Activated naive CD4-positive, alpha-beta T cell treated with anti-CD3 and anti-CD28 coated beads for 36 hours (primary cell): ENCODE measurements at regions of chr2 and their contacts with region 1.

Region 1: GRCh38 chr2:70142590-70143313 is 48.1 kb downstream of the C2orf42 start:
- DNase-seq: peak; percentile 100
- H3K4me3 Mint-ChIP-seq: peak overlapping the region; percentile 93
- H3K27ac Mint-ChIP-seq: peak overlapping the region; percentile 99
- H3K4me1 Mint-ChIP-seq: peaks cover 53% of the 10 kb centered on the region
- H3K27me3 Mint-ChIP-seq: no peaks in the 10 kb centered on the region

Region 2: DNA sequence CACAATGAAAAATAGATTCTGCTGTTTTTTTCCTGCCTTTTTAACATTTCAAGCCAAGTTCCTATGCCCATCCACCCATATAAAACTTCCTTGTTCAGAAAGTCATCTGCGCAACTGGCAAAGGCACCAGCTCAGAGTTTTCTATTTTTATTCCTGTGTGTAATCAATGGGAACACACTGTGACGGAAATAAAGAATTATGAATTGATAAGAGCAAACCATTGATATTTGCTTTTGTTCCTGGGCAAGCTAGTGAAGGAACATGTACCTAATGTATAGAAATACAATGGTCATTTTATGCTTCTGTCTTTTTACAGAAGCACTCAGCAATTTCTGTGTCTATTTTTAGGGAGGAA is 468.5 kb before region 1 on chr2:
- CTCF ChIA-PET with region 1: no interaction called
- intact Hi-C with region 1: no loop called
- DNase-seq: no peak
- H3K4me3 Mint-ChIP-seq: no peak overlapping the region
- H3K27ac Mint-ChIP-seq: no peak overlapping the region
- H3K4me1 Mint-ChIP-seq: peaks cover 28% of the 10 kb centered on the region
- H3K27me3 Mint-ChIP-seq: no peaks in the 10 kb centered on the region

Region 3: GRCh38 chr2:69741619-69742466 is 400.9 kb before region 1 on chr2 and contains the start of gene ANXA4:
- CTCF ChIA-PET with region 1: no interaction called
- intact Hi-C with region 1: loop called (anchors 5 kb)
- DNase-seq: peak; percentile 78
- H3K4me3 Mint-ChIP-seq: peak within 1 kb of the TSS; percentile 75
- H3K27ac Mint-ChIP-seq: peak within 1 kb of the TSS; percentile 78
- H3K4me1 Mint-ChIP-seq: peaks cover 12% of the 10 kb centered on the region
- H3K27me3 Mint-ChIP-seq: no peaks in the 10 kb centered on the region
- total RNA-seq, gene ANXA4: 21.4 to 23.9 TPM

Region 4: GRCh38 chr2:69985688-69986087 is 157.1 kb before region 1 on chr2:
- CTCF ChIA-PET with region 1: interaction called, 3 read pairs
- intact Hi-C with region 1: loop called (anchors 5 kb)
- DNase-seq: no peak
- H3K4me3 Mint-ChIP-seq: no peak overlapping the region
- H3K27ac Mint-ChIP-seq: no peak overlapping the region
- H3K4me1 Mint-ChIP-seq: peaks cover 3% of the 10 kb centered on the region
- H3K27me3 Mint-ChIP-seq: no peaks in the 10 kb centered on the region

Region 5: DNA sequence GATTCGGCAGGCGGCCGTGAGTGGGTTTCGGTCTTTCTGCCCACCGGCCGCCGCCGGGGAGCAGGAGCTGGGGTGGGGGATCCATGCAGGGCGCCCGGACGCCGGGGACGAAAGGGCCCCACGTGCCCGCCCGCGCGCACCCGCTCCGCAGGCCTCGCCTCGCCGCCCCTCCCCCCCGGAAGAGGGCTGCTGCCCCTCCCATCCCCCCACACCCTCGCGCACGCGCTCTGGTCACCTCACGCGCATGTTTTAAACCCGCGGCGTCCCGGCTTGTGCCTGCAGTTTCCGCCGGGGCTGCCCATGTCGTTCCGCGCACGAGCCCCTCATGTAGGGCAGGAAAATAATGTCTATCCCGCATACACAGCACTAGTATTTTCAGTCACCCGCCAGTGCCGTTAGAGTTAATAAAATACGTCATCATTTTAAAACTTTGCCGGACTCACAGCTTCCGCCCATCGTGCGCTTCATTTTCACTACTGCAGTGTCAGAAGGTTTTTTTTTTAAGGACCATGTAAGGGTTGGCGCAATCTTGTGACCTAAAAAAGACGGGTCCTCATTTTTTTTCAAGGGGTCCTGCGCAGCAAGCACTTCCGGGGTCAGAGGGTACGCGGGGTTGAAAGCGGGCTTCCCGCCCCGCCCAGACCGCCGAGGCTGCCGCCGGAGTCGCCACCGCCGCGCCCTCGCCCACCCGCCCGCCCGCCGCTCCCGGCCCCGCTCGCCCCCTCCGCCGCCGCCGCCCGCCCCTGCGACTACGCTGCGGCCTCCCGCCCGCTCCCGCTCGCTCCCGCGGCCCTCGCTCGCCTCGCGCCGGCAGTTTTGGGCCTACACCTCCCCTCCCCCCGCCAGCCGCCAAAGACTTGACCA is 55.7 kb before region 1 on chr2 and contains the start of gene PCBP1:
- CTCF ChIA-PET with region 1: interaction called, 9 read pairs
- intact Hi-C with region 1: loop called (anchors 1 kb)
- DNase-seq: peak; percentile 96
- H3K4me3 Mint-ChIP-seq: peak within 1 kb of the TSS; percentile 97
- H3K27ac Mint-ChIP-seq: peak within 1 kb of the TSS; percentile 100
- H3K4me1 Mint-ChIP-seq: peaks cover 50% of the 10 kb centered on the region
- H3K27me3 Mint-ChIP-seq: no peaks in the 10 kb centered on the region
- total RNA-seq, gene PCBP1: 363 to 374 TPM

Region 6: GRCh38 chr2:70104231-70105111 is 38.3 kb before region 1 on chr2:
- CTCF ChIA-PET with region 1: interaction called, 4 read pairs
- intact Hi-C with region 1: loop called (anchors 1 kb)
- DNase-seq: peak; percentile 81
- H3K4me3 Mint-ChIP-seq: peak overlapping the region; percentile 72
- H3K27ac Mint-ChIP-seq: peak overlapping the region; percentile 93
- H3K4me1 Mint-ChIP-seq: peaks cover 58% of the 10 kb centered on the region
- H3K27me3 Mint-ChIP-seq: no peaks in the 10 kb centered on the region

Region 7: GRCh38 chr2:70132244-70133126 is 10.3 kb before region 1 on chr2:
- CTCF ChIA-PET with region 1: interaction called, 7 read pairs
- intact Hi-C with region 1: loop called (anchors 1 kb)
- DNase-seq: peak; percentile 63
- H3K4me3 Mint-ChIP-seq: peak overlapping the region; percentile 88
- H3K27ac Mint-ChIP-seq: peak overlapping the region; percentile 99
- H3K4me1 Mint-ChIP-seq: peaks cover 77% of the 10 kb centered on the region
- H3K27me3 Mint-ChIP-seq: no peaks in the 10 kb centered on the region

Region 8: DNA sequence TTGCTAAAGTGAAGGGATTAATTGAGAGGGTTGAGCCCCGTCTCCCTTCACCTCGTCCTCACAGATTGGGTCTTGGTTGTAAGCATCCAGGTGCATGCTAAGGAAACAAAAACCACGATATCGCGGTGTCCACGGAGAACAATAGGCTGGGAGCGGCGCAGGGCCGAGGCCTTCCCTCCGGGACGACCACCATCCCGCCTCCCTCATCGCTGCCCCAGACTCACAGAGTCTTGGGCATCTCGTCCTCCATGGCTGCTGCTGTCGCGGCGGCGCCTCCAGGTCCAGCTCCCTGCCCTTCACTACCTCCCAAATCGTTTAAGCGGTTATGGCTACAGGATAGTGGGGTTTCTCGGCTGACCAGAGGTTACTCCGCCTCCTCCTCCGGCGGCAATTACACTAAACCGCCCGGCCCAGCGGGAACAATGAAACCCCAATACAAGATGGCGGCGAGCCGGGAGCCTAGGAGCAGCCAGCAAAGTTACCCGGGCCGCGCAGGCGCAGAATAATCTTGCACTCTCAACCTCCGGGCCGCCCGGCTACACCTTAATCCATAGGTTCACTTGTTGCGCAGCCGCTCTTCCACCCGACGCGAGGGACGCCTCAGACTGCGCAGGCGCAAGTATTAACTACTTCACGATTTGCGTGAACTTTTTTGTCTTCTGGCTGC is 105.6 kb after region 1 on chr2 and contains the start of gene TIA1:
- CTCF ChIA-PET with region 1: interaction called, 3 read pairs
- intact Hi-C with region 1: loop called (anchors 1 kb)
- DNase-seq: peak; percentile 99
- H3K4me3 Mint-ChIP-seq: peak within 1 kb of the TSS; percentile 99
- H3K27ac Mint-ChIP-seq: peak within 1 kb of the TSS; percentile 98
- H3K4me1 Mint-ChIP-seq: peaks cover 32% of the 10 kb centered on the region
- H3K27me3 Mint-ChIP-seq: no peaks in the 10 kb centered on the region
- total RNA-seq, gene TIA1: 83.2 to 83.9 TPM